Breast epithelium (tissue), 4 donors: ENCODE measurements at regions of chr22 and their contacts with region 1.

Region 1: GRCh38 chr22:41479671-41480396 is 10.9 kb downstream of the ACO2 start:
- DNase-seq: no peak
- H3K4me3 ChIP-seq: no peak overlapping the region
- H3K27ac ChIP-seq: peak overlapping the region; percentile 78 to 82
- H3K4me1 ChIP-seq: peaks cover 0 to 22% of the 10 kb centered on the region in 2 donors
- H3K27me3 ChIP-seq: no peaks in the 10 kb centered on the region
- CTCF ChIP-seq: no peak
- POLR2A ChIP-seq: no peak

Region 2: DNA sequence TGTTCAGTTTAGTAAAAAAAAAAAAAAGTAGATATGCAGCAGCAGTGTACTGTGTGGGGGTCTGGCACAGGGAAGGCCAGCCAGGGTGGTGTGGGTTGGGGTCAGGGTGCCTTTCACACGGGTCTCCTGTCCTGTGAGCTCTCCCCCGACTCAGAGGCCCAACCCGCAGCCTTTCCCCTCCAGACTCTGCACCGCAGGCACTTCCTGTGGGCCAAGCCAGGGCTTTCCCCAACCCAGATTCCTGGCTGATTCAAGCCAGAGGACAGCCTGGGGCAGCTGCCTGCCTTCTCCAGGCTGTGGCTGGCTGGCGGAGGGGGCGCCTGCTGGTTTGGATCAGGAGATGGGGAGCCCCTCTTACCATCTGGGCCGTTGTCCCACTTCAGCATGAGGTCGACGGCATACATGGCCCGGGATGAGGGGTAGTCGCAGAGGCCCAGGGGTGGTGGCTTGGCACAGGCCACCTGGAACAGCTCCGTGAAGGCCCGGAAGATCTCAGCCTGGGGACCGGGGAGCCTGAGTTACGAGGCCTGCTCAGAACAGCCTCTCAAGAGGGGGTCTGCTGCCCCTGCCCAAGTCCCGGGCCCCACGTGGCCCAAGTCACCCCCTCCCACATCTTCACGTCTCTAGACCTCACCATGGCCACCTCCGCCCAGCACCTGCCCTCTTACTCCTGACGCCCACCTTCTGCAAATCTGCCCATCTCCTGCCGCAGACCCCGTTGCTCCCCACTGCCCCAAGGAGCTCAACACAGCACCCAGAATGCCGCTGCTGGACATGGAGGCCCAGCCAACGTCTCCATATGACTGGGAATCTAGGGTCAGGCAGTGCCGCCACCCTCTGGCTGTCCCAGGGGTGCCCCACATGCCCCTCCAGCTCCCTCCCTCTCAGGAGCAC is 1688.8 kb after region 1 on chr22:
- intact Hi-C with region 1: loop called (anchors 5 kb)
- DNase-seq: no peak
- H3K4me3 ChIP-seq: no peak overlapping the region
- H3K27ac ChIP-seq: no peak overlapping the region
- H3K4me1 ChIP-seq: peaks cover 0 to 5% of the 10 kb centered on the region in 2 donors
- H3K27me3 ChIP-seq: no peaks in the 10 kb centered on the region
- CTCF ChIP-seq: no peak
- POLR2A ChIP-seq: no peak